ENCODE measurements at regions of chr1 and their contacts with region 1.

Region 1: GRCh38 chr1:226940029-226940805 is at the start of gene COQ8A:
- DNase-seq: peak; percentile 99
- H3K4me3 ChIP-seq: peak within 1 kb of the TSS; percentile 83
- H3K27ac ChIP-seq: peak within 1 kb of the TSS; percentile 91
- H3K4me1 ChIP-seq: peaks cover 26% of the 10 kb centered on the region
- CTCF ChIP-seq: no peak
- total RNA-seq, gene COQ8A: 14.2 and 19.4 TPM in 2 replicates

Region 2: GRCh38 chr1:226634166-226634588 is 306.0 kb before region 1 on chr1:
- CTCF ChIA-PET with region 1: no interaction called
- POLR2A ChIA-PET with region 1: no interaction called
- intact Hi-C with region 1: loop called (anchors 5 kb)
- DNase-seq: peak; percentile 81
- H3K4me3 ChIP-seq: no peak overlapping the region
- H3K27ac ChIP-seq: no peak overlapping the region
- H3K4me1 ChIP-seq: peaks cover 58% of the 10 kb centered on the region
- CTCF ChIP-seq: peak; percentile 98

Region 3: GRCh38 chr1:226644541-226645176 is 295.6 kb before region 1 on chr1:
- CTCF ChIA-PET with region 1: no interaction called
- POLR2A ChIA-PET with region 1: no interaction called
- intact Hi-C with region 1: no loop called
- DNase-seq: no peak
- H3K4me3 ChIP-seq: peak overlapping the region; percentile 7
- H3K27ac ChIP-seq: peak overlapping the region; percentile 62
- H3K4me1 ChIP-seq: peaks cover 39% of the 10 kb centered on the region
- CTCF ChIP-seq: no peak

Region 4: DNA sequence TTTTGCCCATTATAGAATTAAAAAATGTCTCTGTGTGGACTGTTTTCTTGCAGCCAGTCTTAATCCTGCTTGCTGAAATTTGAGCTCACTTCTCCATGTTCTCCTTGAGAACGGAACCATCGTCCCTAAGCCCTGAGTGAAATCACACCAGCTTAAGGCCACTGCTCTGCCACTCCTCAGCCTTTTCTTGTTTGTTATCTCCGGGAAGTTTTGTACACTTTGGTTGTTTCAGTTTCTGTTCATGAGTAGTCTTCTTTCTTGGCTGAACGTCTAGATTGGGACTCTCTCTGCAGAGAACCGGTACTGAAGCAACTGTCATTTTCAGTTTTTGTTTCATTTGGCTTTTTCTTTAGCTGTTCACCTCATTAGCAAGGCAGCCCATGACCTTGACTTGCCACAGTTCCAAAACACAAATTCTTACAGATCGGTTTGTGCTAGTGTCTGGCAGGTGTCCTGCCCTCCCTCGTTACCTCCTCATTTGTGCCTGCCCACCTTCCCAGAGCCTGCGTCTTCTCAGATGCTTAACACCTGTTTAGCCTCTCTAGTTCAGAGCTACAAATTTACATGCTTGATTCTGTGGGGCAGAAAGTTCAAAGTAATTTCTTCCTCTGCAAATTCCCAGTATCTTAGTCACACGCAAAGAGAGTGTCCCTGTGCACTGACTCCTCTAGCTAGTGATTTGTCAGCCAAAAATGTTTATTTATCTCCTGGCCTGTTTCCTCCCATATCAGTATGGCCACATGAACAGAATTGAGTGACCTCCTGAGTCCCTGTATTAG is 57.4 kb before region 1 on chr1:
- CTCF ChIA-PET with region 1: interaction called, 3 read pairs
- POLR2A ChIA-PET with region 1: interaction called, 11 read pairs
- intact Hi-C with region 1: loop called (anchors 2 kb)
- DNase-seq: peak; percentile 72
- H3K4me3 ChIP-seq: peak overlapping the region; percentile 55
- H3K27ac ChIP-seq: peak overlapping the region; percentile 70
- H3K4me1 ChIP-seq: peaks cover 45% of the 10 kb centered on the region
- CTCF ChIP-seq: no peak

Region 5: DNA sequence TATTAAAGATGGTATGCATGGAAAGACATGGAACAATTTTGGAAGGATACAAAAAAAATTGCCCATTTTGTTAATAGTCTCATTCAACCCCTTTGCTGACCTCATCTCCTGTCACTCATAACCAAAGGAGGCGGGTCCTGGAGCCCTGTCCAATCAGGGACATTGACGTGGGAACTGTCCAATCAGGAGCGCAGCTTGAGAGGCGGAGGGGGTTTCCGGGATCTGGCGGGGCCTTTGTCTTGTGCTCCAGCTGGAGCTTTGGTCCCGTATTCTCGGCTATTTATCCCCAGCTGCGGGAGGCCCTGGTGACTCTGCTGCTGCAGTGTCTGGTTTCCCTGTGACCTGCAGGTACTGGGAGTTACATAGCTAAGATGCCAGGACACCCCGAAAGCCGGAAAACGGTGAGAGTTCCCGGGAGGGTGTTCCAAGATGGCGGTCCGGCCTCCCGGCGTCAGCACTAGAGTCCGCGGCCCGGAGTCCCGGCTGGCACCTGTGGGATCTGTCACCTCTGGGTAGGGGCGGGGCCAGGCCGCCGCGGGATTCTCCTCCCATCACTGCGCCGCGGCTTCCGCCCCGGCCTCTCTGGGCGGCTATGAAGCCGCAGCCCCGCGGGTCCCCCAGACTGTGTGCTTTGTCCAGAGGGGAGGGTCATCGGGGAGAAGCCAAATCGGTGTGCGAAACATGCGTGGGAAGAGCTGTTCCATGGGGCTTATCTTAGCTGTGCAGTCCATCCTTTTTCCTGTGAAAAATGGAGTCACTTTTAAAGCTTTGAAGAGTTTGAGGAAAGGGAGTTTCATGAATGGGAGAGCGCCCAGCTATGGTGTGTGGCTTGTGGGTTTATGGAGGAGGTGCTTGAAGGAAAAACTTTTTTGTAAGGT is 623.3 kb after region 1 on chr1 and contains the start of gene ZNF678:
- CTCF ChIA-PET with region 1: no interaction called
- POLR2A ChIA-PET with region 1: no interaction called
- intact Hi-C with region 1: loop called (anchors 10 kb)
- DNase-seq: peak; percentile 96
- H3K4me3 ChIP-seq: peak within 1 kb of the TSS; percentile 84
- H3K27ac ChIP-seq: peak within 1 kb of the TSS; percentile 78
- H3K4me1 ChIP-seq: peaks cover 9% of the 10 kb centered on the region
- CTCF ChIP-seq: no peak
- total RNA-seq, gene ZNF678: 23.9 and 28.3 TPM in 2 replicates

Measured in OCI-LY7 (cell line).